ENCODE measurements at regions of chr15 and their contacts with region 1.

Region 1: GRCh38 chr15:64387562-64388168 is at the start of gene TRIP4:
- DNase-seq: peak; percentile 86
- H3K4me3 ChIP-seq: peak within 1 kb of the TSS; percentile 66 to 91 (median 88)
- H3K27ac ChIP-seq: peak within 1 kb of the TSS; percentile 81 to 86 (median 84)
- H3K4me1 ChIP-seq: peaks cover 0 to 22% (median 11%) of the 10 kb centered on the region in 3 donors
- H3K27me3 ChIP-seq: no peaks in the 10 kb centered on the region
- CTCF ChIP-seq: peak in 1 of 6 experiments; percentile 34
- POLR2A ChIP-seq: peak in 2 of 4 donors; percentile 46 to 47
- total RNA-seq, gene TRIP4: 9.1 to 15.5 (median 12.8) TPM

Region 2: GRCh38 chr15:64162870-64163658 is 224.6 kb before region 1 on chr15 and contains the start of gene PPIB:
- intact Hi-C with region 1: loop called (anchors 10 kb)
- DNase-seq: peak; percentile 87
- H3K4me3 ChIP-seq: peak within 1 kb of the TSS; percentile 63 to 99 (median 84)
- H3K27ac ChIP-seq: peak within 1 kb of the TSS; percentile 85 to 95 (median 92)
- H3K4me1 ChIP-seq: peaks cover 18 to 52% (median 31%) of the 10 kb centered on the region in 3 donors
- H3K27me3 ChIP-seq: no peaks in the 10 kb centered on the region
- CTCF ChIP-seq: peak in 5 of 6 experiments; percentile 23 to 49 (median 35)
- POLR2A ChIP-seq: peak in 2 of 4 donors; percentile 61 to 82
- total RNA-seq, gene PPIB: 246 to 363 (median 313) TPM

Measured in esophagus squamous epithelium (tissue), 5 donors.